Panc1 (cell line): ENCODE measurements at regions of chr20 and their contacts with region 1.

Region 1: DNA sequence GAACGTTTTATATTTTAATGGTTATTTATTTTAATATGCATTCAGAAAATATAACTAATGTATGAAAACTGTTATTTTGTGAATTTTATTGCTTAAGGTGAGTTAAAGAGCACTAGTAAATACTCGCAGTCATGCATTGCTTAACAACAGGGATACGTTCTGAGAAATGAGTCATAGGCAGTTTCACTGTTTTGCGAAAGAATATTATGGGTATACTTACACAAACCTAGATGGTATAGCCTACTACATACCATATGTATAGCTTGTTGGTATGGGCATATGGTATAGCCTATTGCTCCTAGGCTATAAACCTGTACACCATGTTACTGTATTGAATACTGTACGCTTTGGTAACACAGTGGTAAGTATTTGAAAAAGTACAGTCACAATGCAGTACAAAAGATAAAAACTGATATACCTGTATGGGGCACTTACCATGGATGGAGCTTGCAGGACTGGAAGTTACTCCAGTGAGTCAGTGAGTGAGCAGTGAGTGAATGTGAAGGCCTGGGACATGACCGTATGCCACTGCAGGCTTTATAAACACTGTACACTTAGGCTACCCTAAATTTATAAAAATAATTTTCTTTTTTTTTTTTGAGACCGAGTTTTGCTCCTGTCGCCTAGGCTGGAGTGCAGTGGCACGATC is 38.5 kb downstream of the ARFGEF2 start:
- DNase-seq: no peak
- ATAC-seq: no peak
- H3K4me3 ChIP-seq: no peak overlapping the region
- H3K27ac ChIP-seq: no peak overlapping the region
- H3K4me1 ChIP-seq: no peaks in the 10 kb centered on the region
- H3K27me3 ChIP-seq: no peaks in the 10 kb centered on the region
- CTCF ChIP-seq: no peak

Region 2: GRCh38 chr20:49037962-49038387 is 77.9 kb after region 1 on chr20:
- CTCF ChIA-PET with region 1: no interaction called
- POLR2A ChIA-PET with region 1: no interaction called
- in situ Hi-C with region 1: no loop called
- intact Hi-C with region 1: no loop called
- DNase-seq: no peak
- ATAC-seq: no peak
- H3K4me3 ChIP-seq: no peak overlapping the region
- H3K27ac ChIP-seq: no peak overlapping the region
- H3K4me1 ChIP-seq: no peaks in the 10 kb centered on the region
- H3K27me3 ChIP-seq: no peaks in the 10 kb centered on the region
- CTCF ChIP-seq: no peak

Region 3: DNA sequence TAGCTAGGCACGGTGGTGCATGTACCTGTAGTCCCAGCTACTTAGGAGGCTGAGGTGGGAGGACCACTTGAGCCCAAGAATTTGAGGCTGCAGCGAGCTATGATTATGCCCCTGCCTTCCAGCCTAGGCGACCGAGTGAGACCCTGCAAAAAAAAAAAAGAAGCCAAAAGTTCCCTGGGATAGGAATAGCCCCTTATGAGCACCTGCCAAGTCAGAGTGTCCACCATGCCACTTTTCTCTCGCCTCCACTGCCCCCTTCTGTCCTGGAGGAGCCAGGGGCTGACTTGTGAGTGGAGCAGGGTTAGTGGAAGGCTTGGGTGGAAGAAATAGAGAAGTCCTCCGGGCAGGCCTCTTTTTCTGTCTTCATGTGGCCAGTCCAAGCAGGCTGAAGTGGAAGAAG is 247.1 kb after region 1 on chr20:
- CTCF ChIA-PET with region 1: no interaction called
- POLR2A ChIA-PET with region 1: interaction called, 15 read pairs
- in situ Hi-C with region 1: no loop called
- intact Hi-C with region 1: no loop called
- DNase-seq: no peak
- ATAC-seq: peak; percentile 83
- H3K4me3 ChIP-seq: no peak overlapping the region
- H3K27ac ChIP-seq: no peak overlapping the region
- H3K4me1 ChIP-seq: no peaks in the 10 kb centered on the region
- H3K27me3 ChIP-seq: no peaks in the 10 kb centered on the region
- CTCF ChIP-seq: no peak